GM10248 (cell line): ENCODE measurements at regions of chr2 and their contacts with region 1.

Region 1: DNA sequence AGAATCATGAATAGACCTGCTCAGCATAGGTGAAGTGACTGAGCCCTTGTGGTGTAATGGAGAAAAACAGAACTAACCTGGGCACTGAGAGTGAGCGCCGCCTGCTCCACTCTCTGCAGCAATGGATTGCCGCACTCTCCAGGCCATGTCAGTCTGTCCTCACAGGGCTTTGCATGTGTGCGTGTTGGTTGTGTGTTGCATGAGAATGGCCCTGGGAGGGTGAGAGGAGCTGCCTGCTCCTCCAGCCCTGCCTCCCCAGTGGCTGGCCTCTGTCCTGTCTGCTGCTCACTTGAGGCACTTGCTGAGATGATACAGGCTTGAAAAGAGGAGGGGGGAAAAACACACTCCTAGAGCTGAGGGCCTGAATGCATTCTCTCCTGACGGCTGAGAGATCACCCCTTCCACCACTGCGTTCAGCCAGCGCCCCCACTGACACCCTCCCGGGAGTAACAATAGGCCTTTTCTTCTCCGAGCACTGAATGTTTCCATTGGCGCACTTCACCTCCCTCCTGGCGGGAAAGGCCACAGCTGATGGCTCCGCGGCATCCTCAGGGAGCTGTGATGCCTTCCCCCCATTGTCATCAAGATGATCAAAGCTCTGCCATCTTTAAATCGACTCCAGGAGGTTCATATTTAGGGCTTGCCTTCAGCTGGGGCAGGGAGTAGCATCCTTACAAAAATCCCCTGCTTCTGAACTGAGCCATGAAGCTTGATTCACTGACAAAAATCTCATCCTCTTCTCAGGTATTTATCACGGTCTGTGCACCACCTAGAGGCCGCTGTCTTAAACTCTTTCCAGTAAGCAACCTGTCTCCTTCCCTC is 49.9 kb upstream of the DAPL1 start:
- DNase-seq: peak; percentile 47
- CTCF ChIP-seq: peak; percentile 57

Region 2: GRCh38 chr2:157743051-157743450 is 1002.2 kb before region 1 on chr2:
- CTCF ChIA-PET with region 1: no interaction called
- POLR2A ChIA-PET with region 1: no interaction called
- DNase-seq: no peak
- CTCF ChIP-seq: no peak

Region 3: GRCh38 chr2:158034199-158034866 is 710.9 kb before region 1 on chr2:
- CTCF ChIA-PET with region 1: interaction called, 94 read pairs
- POLR2A ChIA-PET with region 1: no interaction called
- DNase-seq: peak; percentile 35
- CTCF ChIP-seq: peak; percentile 55

Region 4: DNA sequence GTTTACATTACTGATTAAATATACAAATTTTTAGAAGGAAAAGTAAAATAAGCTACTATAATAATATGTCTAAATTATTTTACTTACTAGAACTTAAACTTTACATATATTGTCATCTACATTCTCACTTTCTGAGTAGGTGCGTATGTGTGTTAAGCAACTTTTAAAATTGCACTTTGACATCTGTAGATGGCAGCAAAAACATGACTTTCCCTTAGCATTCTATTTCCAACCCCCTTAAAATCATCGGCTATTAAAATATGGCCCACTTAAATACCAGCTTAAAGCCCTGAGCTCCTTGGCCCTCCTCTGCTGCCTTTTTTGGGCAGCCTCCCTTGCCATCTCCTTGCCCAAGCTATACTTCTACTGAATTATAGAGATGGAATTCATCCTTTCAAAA is 565.6 kb before region 1 on chr2:
- CTCF ChIA-PET with region 1: interaction called, 40 read pairs
- POLR2A ChIA-PET with region 1: no interaction called
- DNase-seq: no peak
- CTCF ChIP-seq: peak; percentile 40

Region 5: DNA sequence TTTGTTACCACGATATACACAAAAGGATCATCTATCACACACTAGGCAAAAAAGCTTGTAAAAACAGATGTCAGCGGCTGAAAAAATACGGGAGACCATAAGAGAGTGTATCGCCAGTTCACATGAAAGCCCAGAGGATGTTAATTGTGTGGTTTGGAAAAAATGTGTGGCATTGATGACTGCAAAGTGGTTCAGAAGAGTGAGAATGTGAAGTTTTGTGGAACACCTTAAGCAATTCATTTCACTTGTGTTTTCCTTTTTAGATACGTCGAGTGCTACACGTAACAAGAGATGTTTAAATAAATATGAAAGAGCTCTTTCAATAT is 11.9 kb before region 1 on chr2:
- CTCF ChIA-PET with region 1: interaction called, 32 read pairs
- POLR2A ChIA-PET with region 1: no interaction called
- DNase-seq: no peak
- CTCF ChIP-seq: no peak